ENCODE measurements at regions of chr19 and their contacts with region 1.

Region 1: GRCh38 chr19:16125737-16126495 is 14.2 kb downstream of the RAB8A start:
- DNase-seq: no peak

Region 2: DNA sequence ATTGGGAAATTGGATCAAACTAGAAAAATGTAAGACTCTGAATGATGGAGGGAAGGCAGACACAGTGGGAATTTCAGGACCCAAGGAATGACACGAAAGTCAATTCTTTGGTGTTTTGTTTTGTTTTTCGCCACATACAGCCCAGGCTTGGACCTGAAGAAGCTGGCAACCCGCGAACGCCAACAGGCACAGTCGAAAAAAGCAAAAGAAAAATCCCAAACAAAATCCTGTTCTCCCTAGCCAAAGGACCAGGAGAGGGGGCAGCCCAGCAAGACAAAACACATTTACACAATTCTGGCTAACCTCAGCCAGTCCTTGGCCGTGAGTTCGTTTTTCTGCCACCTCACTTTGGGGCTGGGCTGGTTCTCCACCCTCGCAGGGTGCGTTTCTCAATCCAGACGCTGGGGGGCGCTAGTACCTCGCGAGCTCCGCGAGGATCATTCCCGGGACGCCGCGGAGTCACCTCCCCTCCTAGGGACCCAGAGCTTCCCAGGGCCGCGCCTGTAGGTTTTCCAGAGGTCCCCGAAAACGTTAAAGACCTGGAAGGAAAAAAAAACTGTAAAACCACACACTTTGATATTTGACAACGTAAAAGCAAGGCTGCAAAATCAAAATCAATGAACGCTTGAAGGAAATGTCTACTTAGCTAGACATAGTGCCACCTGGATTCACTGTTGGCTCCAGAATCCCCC is 84.5 kb before region 1 on chr19:
- in situ Hi-C with region 1: loop called (anchors 5 kb)
- DNase-seq: peak; percentile 77

Measured in G401 (cell line).